ENCODE measurements at regions of chr14 and their contacts with region 1.

Region 1: GRCh38 chr14:31159682-31160296 is 47.8 kb downstream of the HECTD1 start:
- DNase-seq: no peak
- ATAC-seq: no peak
- H3K4me3 ChIP-seq: no peak overlapping the region
- H3K4me3 Mint-ChIP-seq: no peak overlapping the region
- H3K27ac ChIP-seq: no peak overlapping the region
- H3K27ac Mint-ChIP-seq: no peak overlapping the region
- H3K4me1 ChIP-seq: no peaks in the 10 kb centered on the region
- H3K4me1 Mint-ChIP-seq: no peaks in the 10 kb centered on the region
- H3K27me3 ChIP-seq: no peaks in the 10 kb centered on the region
- H3K27me3 Mint-ChIP-seq: no peaks in the 10 kb centered on the region
- CTCF ChIP-seq: no peak

Region 2: GRCh38 chr14:31018056-31018645 is 141.6 kb before region 1 on chr14:
- CTCF ChIA-PET with region 1: no interaction called
- POLR2A ChIA-PET with region 1: no interaction called
- intact Hi-C with region 1: no loop called
- DNase-seq: no peak
- ATAC-seq: no peak
- H3K4me3 ChIP-seq: no peak overlapping the region
- H3K4me3 Mint-ChIP-seq: no peak overlapping the region
- H3K27ac ChIP-seq: no peak overlapping the region
- H3K27ac Mint-ChIP-seq: no peak overlapping the region
- H3K4me1 ChIP-seq: no peaks in the 10 kb centered on the region
- H3K4me1 Mint-ChIP-seq: peaks cover 23% of the 10 kb centered on the region
- H3K27me3 ChIP-seq: no peaks in the 10 kb centered on the region
- H3K27me3 Mint-ChIP-seq: no peaks in the 10 kb centered on the region
- CTCF ChIP-seq: no peak

Region 3: DNA sequence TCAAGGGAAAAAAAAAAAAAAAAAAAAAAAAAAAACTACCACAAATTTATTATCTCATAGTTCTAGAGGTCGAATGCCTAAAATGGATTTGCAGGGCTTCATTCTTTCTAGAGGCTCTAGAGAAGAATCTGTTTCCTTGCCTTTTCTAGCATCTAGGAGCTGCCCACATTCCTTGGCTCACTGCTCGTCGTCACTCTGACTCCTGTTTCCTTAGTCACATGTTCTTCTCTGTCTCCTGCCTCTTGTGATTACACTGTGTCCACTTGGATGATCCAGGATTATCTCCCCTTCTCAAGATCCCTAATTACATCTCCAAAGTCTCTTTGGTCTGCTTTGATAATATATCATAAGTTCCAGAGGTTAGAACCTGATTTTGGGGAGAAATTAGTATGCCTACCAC is 40.9 kb before region 1 on chr14:
- CTCF ChIA-PET with region 1: no interaction called
- POLR2A ChIA-PET with region 1: no interaction called
- intact Hi-C with region 1: loop called (anchors 10 kb)
- DNase-seq: no peak
- ATAC-seq: no peak
- H3K4me3 ChIP-seq: no peak overlapping the region
- H3K4me3 Mint-ChIP-seq: no peak overlapping the region
- H3K27ac ChIP-seq: no peak overlapping the region
- H3K27ac Mint-ChIP-seq: no peak overlapping the region
- H3K4me1 ChIP-seq: no peaks in the 10 kb centered on the region
- H3K4me1 Mint-ChIP-seq: no peaks in the 10 kb centered on the region
- H3K27me3 ChIP-seq: no peaks in the 10 kb centered on the region
- H3K27me3 Mint-ChIP-seq: no peaks in the 10 kb centered on the region
- CTCF ChIP-seq: no peak

Measured in B cell (primary cell).